Activated T-helper 1 cell treated with anti-CD3 and anti-CD28 coated beads, Interleukin-12 subunit alpha, Interleukin-12 subunit beta, Interleukin-2, Interleukin-4 antibody, amounts not matched to agents 30 ng/mL and 10 ng/mL and 1 ng/mL, durations not matched to agents 14 hours and 24 hours and 36 hours (primary cell): ENCODE measurements at regions of chr13 and their contacts with region 1.

Region 1: GRCh38 chr13:98664039-98664438 is 87.1 kb upstream of the STK24 start:
- DNase-seq: peak; percentile 21
- H3K4me3 Mint-ChIP-seq: no peak overlapping the region
- H3K27ac Mint-ChIP-seq: peak overlapping the region; percentile 72
- H3K4me1 Mint-ChIP-seq: peaks cover 15% of the 10 kb centered on the region
- H3K27me3 Mint-ChIP-seq: peaks cover 17% of the 10 kb centered on the region

Region 2: GRCh38 chr13:98509271-98510155 is 154.5 kb before region 1 on chr13:
- intact Hi-C with region 1: loop called (anchors 1 kb)
- DNase-seq: peak; percentile 31
- H3K4me3 Mint-ChIP-seq: peak overlapping the region; percentile 13
- H3K27ac Mint-ChIP-seq: peak overlapping the region; percentile 65
- H3K4me1 Mint-ChIP-seq: peaks cover 80% of the 10 kb centered on the region
- H3K27me3 Mint-ChIP-seq: no peaks in the 10 kb centered on the region

Region 3: DNA sequence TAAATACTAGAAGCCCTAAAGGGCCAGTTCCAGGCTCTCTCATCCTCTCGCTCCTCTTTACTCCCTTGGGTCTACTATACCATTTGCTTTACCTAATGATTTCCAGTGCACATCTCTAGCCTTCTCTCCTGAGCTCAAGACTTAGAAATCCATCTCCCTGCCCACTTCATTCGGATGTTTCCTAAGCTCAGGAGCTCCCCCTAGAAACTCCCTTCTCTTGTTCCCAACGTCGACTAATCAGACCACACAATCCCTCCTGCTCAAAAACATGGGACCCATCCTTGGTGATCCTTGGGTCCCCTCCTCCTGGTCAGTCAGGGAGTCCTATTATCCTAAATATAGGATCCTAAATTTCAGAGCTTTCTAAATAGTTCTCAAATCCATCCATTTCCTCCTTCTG is 66.0 kb before region 1 on chr13:
- intact Hi-C with region 1: loop called (anchors 1 kb)
- DNase-seq: no peak
- H3K4me3 Mint-ChIP-seq: no peak overlapping the region
- H3K27ac Mint-ChIP-seq: no peak overlapping the region
- H3K4me1 Mint-ChIP-seq: peaks cover 12% of the 10 kb centered on the region
- H3K27me3 Mint-ChIP-seq: peaks cover 2% of the 10 kb centered on the region

Region 4: GRCh38 chr13:98957731-98958442 is 293.8 kb after region 1 on chr13:
- intact Hi-C with region 1: no loop called
- DNase-seq: no peak
- H3K4me3 Mint-ChIP-seq: no peak overlapping the region
- H3K27ac Mint-ChIP-seq: no peak overlapping the region
- H3K4me1 Mint-ChIP-seq: peaks cover 6% of the 10 kb centered on the region
- H3K27me3 Mint-ChIP-seq: no peaks in the 10 kb centered on the region